CD8-positive, alpha-beta T cell (primary cell): ENCODE measurements at regions of chr2 and their contacts with region 1.

Region 1: GRCh38 chr2:85420536-85421259 is 2.2 kb downstream of the SH2D6 start:
- DNase-seq: peak; percentile 75 to 95 (median 90)
- ATAC-seq: peak; percentile 74
- H3K4me3 ChIP-seq: no peak overlapping the region
- H3K4me3 Mint-ChIP-seq: peak overlapping the region; percentile 69
- H3K27ac ChIP-seq: no peak overlapping the region
- H3K27ac Mint-ChIP-seq: peak overlapping the region; percentile 58
- H3K4me1 ChIP-seq: peaks cover 27% of the 10 kb centered on the region
- H3K4me1 Mint-ChIP-seq: peaks cover 18% of the 10 kb centered on the region
- H3K27me3 ChIP-seq: no peaks in the 10 kb centered on the region
- H3K27me3 Mint-ChIP-seq: no peaks in the 10 kb centered on the region
- CTCF ChIP-seq: peak; percentile 97

Region 2: DNA sequence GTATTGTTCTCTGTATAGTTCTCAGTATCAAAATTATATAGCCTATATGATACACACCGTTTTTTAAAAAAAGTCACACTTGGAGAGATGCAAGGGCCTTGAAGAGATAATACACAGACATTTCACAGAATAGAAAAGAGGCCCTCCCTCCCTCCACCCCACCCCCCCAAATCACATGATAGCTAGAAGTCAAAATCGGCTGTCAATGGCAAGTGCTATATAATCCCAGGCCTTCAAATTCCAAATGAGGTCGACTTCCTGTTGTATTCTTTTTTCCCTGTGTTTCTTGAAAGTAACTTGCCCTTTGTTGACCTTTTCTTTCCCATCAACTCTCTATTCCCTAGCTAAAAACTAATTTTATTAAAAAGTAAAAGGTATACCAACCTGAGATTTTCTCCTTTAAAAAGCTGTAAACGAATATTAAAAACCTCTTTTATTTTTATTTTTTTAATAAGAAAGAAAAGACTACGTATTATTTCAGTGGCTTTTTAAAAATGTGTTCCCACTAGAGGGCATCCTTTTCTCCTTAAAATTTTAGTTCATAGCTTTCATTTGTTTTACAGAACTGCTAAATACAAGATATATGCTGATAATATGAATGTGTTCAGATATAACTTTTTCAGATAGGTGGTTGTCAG is 403.2 kb before region 1 on chr2:
- CTCF ChIA-PET with region 1: no interaction called
- POLR2A ChIA-PET with region 1: no interaction called
- intact Hi-C with region 1: no loop called
- DNase-seq: peak in 2 of 9 experiments; percentile 23 to 39
- ATAC-seq: no peak
- H3K4me3 ChIP-seq: no peak overlapping the region
- H3K4me3 Mint-ChIP-seq: no peak overlapping the region
- H3K27ac ChIP-seq: no peak overlapping the region
- H3K27ac Mint-ChIP-seq: peak overlapping the region; percentile 64
- H3K4me1 ChIP-seq: peaks cover 15% of the 10 kb centered on the region
- H3K4me1 Mint-ChIP-seq: peaks cover 69% of the 10 kb centered on the region
- H3K27me3 ChIP-seq: no peaks in the 10 kb centered on the region
- H3K27me3 Mint-ChIP-seq: no peaks in the 10 kb centered on the region
- CTCF ChIP-seq: peak; percentile 56

Region 3: GRCh38 chr2:85085563-85085962 is 335.1 kb before region 1 on chr2:
- CTCF ChIA-PET with region 1: no interaction called
- POLR2A ChIA-PET with region 1: no interaction called
- intact Hi-C with region 1: no loop called
- DNase-seq: no peak
- ATAC-seq: no peak
- H3K4me3 ChIP-seq: no peak overlapping the region
- H3K4me3 Mint-ChIP-seq: no peak overlapping the region
- H3K27ac ChIP-seq: no peak overlapping the region
- H3K27ac Mint-ChIP-seq: no peak overlapping the region
- H3K4me1 ChIP-seq: no peaks in the 10 kb centered on the region
- H3K4me1 Mint-ChIP-seq: no peaks in the 10 kb centered on the region
- H3K27me3 ChIP-seq: no peaks in the 10 kb centered on the region
- H3K27me3 Mint-ChIP-seq: peaks cover 25% of the 10 kb centered on the region
- CTCF ChIP-seq: no peak

Region 4: GRCh38 chr2:85327822-85328617 is 92.7 kb before region 1 on chr2 and contains the start of gene TGOLN2:
- CTCF ChIA-PET with region 1: no interaction called
- POLR2A ChIA-PET with region 1: interaction called, 8 read pairs
- intact Hi-C with region 1: loop called (anchors 1 to 5 kb)
- DNase-seq: peak; percentile 88 to 97 (median 94)
- ATAC-seq: peak; percentile 85
- H3K4me3 ChIP-seq: peak within 1 kb of the TSS; percentile 84 to 96
- H3K4me3 Mint-ChIP-seq: peak within 1 kb of the TSS; percentile 95
- H3K27ac ChIP-seq: peak within 1 kb of the TSS; percentile 97
- H3K27ac Mint-ChIP-seq: peak within 1 kb of the TSS; percentile 99
- H3K4me1 ChIP-seq: peaks cover 37% of the 10 kb centered on the region
- H3K4me1 Mint-ChIP-seq: peaks cover 45% of the 10 kb centered on the region
- H3K27me3 ChIP-seq: no peaks in the 10 kb centered on the region
- H3K27me3 Mint-ChIP-seq: no peaks in the 10 kb centered on the region
- CTCF ChIP-seq: no peak
- total RNA-seq, gene TGOLN2: 127 to 128 TPM

Region 5: DNA sequence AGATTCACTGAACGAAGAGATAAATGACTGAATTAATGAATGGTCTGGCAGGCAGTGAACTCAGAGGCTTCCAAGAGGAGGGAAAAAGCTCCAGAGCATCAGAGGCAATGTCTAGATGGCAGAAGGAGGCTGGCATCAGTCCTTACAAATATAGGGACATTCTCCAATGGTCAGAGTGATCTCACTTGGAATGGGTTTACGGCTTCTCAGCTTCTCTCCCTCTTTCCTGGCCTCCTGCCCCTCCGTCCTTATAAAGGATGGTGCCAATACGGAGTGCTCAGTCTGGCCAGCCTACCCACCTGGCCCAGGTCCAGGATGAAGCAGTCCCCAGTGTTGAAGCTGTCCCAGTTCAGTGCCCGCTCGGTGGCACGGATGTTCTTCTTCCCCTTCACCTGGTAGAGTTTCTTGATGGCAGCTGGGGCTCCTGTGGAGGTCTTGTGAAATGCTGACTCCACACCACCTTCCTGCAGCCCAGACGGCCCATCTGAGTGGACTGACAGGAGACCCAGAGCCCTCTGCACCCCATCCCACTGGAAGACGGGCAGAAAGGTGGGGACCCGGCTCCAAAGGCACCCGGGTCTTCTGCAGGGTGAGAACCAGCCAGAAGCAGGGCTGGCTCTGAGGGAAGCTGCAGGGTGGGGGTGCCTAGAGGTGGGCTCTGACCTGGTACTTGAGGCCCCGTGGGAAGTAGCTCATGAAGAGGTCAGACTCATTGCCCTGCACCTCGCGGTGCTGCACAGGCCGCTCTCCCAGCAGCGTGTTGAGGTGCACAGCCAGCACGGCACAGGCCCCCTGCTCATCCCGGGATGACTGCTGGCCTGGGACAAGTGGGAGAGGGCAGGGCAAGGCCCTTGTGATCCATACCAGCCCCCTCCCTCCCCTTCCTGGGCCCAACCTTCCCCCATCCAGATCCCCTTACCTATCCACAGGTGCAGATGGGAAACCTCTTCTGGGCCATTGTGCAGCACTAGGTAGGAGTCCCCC is 19.5 kb before region 1 on chr2:
- CTCF ChIA-PET with region 1: no interaction called
- POLR2A ChIA-PET with region 1: no interaction called
- intact Hi-C with region 1: no loop called
- DNase-seq: no peak
- ATAC-seq: no peak
- H3K4me3 ChIP-seq: no peak overlapping the region
- H3K4me3 Mint-ChIP-seq: no peak overlapping the region
- H3K27ac ChIP-seq: no peak overlapping the region
- H3K27ac Mint-ChIP-seq: no peak overlapping the region
- H3K4me1 ChIP-seq: peaks cover 14% of the 10 kb centered on the region
- H3K4me1 Mint-ChIP-seq: peaks cover 8% of the 10 kb centered on the region
- H3K27me3 ChIP-seq: no peaks in the 10 kb centered on the region
- H3K27me3 Mint-ChIP-seq: no peaks in the 10 kb centered on the region
- CTCF ChIP-seq: no peak

Region 6: DNA sequence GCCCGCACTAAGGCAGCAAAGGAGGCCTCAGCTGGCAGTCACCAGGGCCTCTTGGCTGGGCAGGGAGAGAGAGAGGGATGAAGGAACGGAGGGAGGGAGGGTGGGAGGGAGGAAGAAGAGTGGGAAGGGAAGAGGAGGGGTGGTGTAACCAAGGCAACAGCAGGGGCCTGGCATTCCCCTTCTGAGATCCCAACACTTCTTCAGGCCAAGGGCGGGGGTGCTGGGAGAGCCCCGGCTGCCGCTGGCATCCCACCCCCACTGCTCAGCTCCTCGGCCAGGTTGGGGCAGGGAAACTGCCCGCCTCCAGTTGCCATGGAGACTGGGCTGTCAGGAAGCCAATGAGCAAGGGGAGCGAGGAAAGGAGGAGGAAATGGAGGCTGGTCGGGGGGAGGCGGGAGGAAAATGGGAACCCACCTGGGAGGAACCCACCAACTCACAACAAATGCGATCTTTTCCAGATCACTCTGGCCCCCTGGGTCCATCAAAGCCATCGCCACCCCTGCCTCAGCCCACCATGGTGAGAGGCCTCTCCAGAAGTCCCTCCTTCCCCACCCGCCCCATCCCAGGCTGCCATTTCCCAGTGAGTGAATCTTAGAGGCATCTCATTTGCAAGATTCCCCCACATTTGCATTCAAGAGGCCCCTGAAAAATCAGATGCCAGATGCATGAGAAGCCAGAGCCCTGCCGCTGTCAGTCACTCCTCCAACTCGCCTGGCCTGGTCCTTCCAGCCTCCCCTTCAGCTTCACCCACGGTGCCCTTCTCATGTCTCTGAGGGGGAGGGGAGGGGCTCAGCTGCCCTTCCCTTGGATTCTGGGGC is 10.3 kb after region 1 on chr2:
- CTCF ChIA-PET with region 1: interaction called, 15 read pairs
- POLR2A ChIA-PET with region 1: no interaction called
- intact Hi-C with region 1: no loop called
- DNase-seq: peak in 1 of 9 experiments; percentile 2
- ATAC-seq: no peak
- H3K4me3 ChIP-seq: no peak overlapping the region
- H3K4me3 Mint-ChIP-seq: no peak overlapping the region
- H3K27ac ChIP-seq: no peak overlapping the region
- H3K27ac Mint-ChIP-seq: no peak overlapping the region
- H3K4me1 ChIP-seq: no peaks in the 10 kb centered on the region
- H3K4me1 Mint-ChIP-seq: peaks cover 5% of the 10 kb centered on the region
- H3K27me3 ChIP-seq: no peaks in the 10 kb centered on the region
- H3K27me3 Mint-ChIP-seq: no peaks in the 10 kb centered on the region
- CTCF ChIP-seq: no peak

Region 7: DNA sequence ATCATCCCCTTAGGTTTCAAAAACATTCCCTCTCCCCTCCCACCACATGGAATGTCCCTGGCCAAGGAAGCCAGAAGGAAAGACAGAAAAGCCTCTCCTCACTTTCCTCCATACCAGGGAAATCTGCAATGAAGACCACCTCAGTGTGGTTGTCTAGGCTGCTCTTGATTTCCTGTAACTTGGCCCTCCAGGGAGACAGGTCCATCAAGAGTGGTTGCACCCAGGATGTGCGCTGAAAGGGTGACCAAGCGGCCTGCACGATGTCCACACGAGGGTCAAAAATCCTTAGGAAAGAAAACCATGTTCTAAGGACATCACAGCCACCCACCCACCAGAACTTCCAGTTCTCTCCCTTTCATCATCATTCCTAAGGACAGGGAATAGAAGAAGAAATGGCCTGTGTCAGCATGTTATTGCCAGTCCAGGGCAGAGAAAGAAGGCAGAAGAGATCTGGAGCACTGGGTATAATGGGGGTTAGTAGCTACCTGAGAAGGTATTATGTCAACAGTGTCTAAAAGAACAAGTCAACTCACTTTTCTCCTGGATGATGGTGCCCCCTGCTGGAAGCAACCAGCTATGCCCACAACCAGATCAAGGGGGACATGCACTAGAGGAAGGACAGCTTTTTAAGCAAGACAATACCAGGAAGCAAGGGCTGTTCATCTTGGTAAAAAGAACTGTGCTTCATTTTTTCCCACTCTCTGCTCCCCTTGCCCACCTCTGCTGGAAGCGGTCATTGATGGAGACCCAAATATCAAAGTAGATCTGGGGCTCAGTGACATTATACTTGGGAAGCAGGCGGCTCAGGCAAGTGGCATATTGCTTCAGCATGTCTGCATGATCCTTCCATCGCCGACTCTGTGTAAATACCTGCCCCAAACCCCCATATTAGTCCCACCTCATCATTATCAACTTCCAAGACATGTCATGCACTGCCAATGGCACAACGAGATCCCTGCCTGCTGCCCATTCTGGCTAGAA is 131.3 kb after region 1 on chr2:
- CTCF ChIA-PET with region 1: interaction called, 355 read pairs
- POLR2A ChIA-PET with region 1: interaction called, 39 read pairs
- intact Hi-C with region 1: loop called (anchors 1 kb)
- DNase-seq: peak; percentile 83 to 94 (median 88)
- ATAC-seq: peak; percentile 100
- H3K4me3 ChIP-seq: no peak overlapping the region
- H3K4me3 Mint-ChIP-seq: no peak overlapping the region
- H3K27ac ChIP-seq: no peak overlapping the region
- H3K27ac Mint-ChIP-seq: no peak overlapping the region
- H3K4me1 ChIP-seq: no peaks in the 10 kb centered on the region
- H3K4me1 Mint-ChIP-seq: peaks cover 4% of the 10 kb centered on the region
- H3K27me3 ChIP-seq: no peaks in the 10 kb centered on the region
- H3K27me3 Mint-ChIP-seq: no peaks in the 10 kb centered on the region
- CTCF ChIP-seq: peak; percentile 87

Region 8: GRCh38 chr2:85619617-85620016 is 198.9 kb after region 1 on chr2:
- CTCF ChIA-PET with region 1: no interaction called
- POLR2A ChIA-PET with region 1: no interaction called
- intact Hi-C with region 1: loop called in 1 of 2 experiments (anchors 5 kb)
- DNase-seq: no peak
- ATAC-seq: no peak
- H3K4me3 ChIP-seq: no peak overlapping the region
- H3K4me3 Mint-ChIP-seq: no peak overlapping the region
- H3K27ac ChIP-seq: no peak overlapping the region
- H3K27ac Mint-ChIP-seq: no peak overlapping the region
- H3K4me1 ChIP-seq: peaks cover 20% of the 10 kb centered on the region
- H3K4me1 Mint-ChIP-seq: peaks cover 32% of the 10 kb centered on the region
- H3K27me3 ChIP-seq: no peaks in the 10 kb centered on the region
- H3K27me3 Mint-ChIP-seq: no peaks in the 10 kb centered on the region
- CTCF ChIP-seq: no peak

Region 9: DNA sequence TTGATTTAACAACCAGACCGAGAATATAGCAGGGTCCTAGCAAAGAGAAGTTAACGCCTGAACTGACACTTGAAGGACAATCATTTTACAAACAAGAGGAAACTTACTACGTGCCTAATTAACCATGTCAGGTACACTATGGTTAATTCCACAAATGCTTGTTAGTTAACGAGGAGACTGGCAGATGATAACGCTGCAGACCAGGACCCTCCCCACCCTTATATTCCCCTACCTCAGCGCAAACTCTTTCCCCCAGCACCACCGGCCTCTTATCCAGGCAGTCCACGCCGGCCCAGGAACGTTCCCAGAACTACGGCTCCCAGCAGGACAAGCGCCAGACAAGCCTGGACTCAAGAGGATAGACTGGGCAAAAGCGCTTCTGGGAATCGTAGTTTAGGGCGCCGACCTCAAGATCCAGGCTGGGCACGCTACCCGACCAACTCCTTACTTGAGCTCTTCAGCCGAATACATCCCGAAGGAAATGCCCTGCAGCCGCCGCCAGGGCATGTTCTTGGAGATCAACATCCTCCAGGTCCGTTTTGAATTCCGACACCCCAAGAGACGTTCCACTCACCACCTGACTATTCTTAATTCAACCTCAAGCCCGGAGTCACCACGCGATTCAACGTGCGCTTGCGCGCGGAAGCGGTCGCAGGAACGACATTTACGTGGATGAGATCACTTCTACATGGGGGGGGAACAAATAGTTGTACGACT is 684.7 kb after region 1 on chr2 and contains the start of gene POLR1A:
- CTCF ChIA-PET with region 1: no interaction called
- POLR2A ChIA-PET with region 1: no interaction called
- intact Hi-C with region 1: loop called in 1 of 2 experiments (anchors 10 kb)
- DNase-seq: peak; percentile 64 to 94 (median 83)
- ATAC-seq: peak; percentile 77
- H3K4me3 ChIP-seq: peak within 1 kb of the TSS; percentile 66 to 92
- H3K4me3 Mint-ChIP-seq: peak within 1 kb of the TSS; percentile 92
- H3K27ac ChIP-seq: peak within 1 kb of the TSS; percentile 80 to 87
- H3K27ac Mint-ChIP-seq: peak within 1 kb of the TSS; percentile 99
- H3K4me1 ChIP-seq: peaks cover 24% of the 10 kb centered on the region
- H3K4me1 Mint-ChIP-seq: peaks cover 66% of the 10 kb centered on the region
- H3K27me3 ChIP-seq: no peaks in the 10 kb centered on the region
- H3K27me3 Mint-ChIP-seq: no peaks in the 10 kb centered on the region
- CTCF ChIP-seq: no peak
- total RNA-seq, gene POLR1A: 12.3 to 15.2 TPM